ENCODE measurements at regions of chr12 and their contacts with region 1.

Region 1: DNA sequence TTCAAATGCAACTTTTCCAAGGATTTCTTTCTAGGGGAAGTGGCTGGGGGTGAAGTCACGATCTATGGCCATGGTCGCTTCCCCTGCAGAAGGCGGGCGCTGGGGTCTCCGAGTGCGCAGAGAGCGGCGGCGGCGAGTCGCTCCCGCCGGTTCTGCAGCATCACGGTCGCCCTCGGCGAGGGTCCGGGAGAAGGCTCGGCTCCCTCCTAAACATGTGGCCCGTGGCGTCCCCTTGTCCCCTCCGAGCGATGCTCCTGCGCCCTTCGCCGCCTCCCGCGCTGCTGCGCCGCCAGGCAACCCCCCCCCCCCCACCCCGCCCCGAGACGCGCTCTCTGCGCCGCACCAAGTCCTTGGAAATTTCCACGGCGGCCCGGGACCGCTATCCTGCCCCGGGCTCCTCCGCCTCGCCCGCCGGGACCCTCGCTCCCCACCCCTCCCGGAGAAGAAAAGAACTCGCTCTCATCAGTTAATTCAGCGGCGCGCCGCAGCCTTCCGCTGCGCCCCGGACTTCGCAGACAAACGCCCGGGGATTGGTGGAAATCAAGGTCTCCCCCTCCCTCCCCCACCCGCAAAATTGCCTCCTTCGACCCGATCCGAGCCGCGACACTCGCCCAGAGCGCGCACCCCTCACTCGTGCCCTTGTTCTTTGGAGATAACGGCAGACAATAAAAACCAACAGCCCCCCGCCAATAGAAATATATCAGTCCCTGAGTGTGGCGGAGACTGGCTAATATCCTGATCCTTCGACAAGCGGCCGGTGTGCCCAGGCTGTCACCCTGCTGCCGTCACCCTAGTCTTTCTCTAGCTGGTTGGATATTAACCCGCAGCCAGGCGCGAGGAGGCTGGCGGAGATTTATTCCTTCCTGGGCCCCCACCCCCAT is at the start of gene ST8SIA1:
- DNase-seq: peak; percentile 47
- H3K4me3 ChIP-seq: peak within 1 kb of the TSS; percentile 44
- H3K27ac ChIP-seq: peak within 1 kb of the TSS; percentile 49
- H3K4me1 ChIP-seq: no peaks in the 10 kb centered on the region
- H3K27me3 ChIP-seq: peaks cover 13% of the 10 kb centered on the region
- CTCF ChIP-seq: no peak
- total RNA-seq, gene ST8SIA1: 1.2 to 2.7 TPM

Region 2: DNA sequence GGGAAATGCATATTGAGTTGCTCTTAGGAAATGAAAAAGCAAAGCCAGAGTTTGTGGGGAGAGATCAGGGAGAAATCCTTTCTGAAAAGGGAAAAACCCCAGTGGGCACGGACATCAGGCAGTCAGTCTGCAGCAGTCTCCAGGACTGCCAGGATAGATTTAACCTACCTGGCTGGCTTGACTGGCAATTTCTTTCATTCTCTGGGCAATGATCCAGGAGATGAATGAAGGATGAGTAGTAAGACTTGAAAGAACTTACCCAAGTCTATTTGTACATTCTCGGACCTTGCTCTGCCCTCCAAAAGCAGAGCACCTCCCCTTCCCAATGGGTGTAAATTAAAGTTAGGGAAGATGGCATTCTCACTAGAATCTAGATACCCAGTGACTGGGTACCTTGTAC is 245.8 kb before region 1 on chr12:
- intact Hi-C with region 1: loop called (anchors 5 kb)
- DNase-seq: no peak
- H3K4me3 ChIP-seq: no peak overlapping the region
- H3K27ac ChIP-seq: no peak overlapping the region
- H3K4me1 ChIP-seq: no peaks in the 10 kb centered on the region
- H3K27me3 ChIP-seq: no peaks in the 10 kb centered on the region
- CTCF ChIP-seq: no peak

Region 3: GRCh38 chr12:22100958-22101748 is 233.5 kb before region 1 on chr12:
- intact Hi-C with region 1: loop called (anchors 5 kb)
- DNase-seq: peak; percentile 54
- H3K4me3 ChIP-seq: no peak overlapping the region
- H3K27ac ChIP-seq: no peak overlapping the region
- H3K4me1 ChIP-seq: no peaks in the 10 kb centered on the region
- H3K27me3 ChIP-seq: no peaks in the 10 kb centered on the region
- CTCF ChIP-seq: peak; percentile 34

Region 4: DNA sequence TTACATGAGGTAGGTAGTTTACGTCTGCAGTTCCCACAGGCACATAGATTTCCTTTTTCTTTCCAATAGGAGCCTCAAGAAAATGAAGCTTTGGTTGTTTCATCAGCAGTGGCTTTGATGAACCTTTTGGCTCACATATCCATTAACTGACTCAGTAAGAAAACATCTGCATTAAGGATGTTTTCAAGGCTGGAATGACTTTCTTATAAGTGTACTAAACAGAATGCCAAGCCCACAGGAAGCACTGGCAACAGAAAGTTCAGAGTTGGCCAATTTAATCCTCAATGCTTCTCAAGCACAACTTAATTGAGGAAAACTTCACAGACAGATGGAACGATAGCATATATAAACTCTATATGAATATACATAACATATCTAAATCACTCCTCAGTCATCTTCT is 63.6 kb before region 1 on chr12:
- intact Hi-C with region 1: no loop called
- DNase-seq: no peak
- H3K4me3 ChIP-seq: no peak overlapping the region
- H3K27ac ChIP-seq: no peak overlapping the region
- H3K4me1 ChIP-seq: no peaks in the 10 kb centered on the region
- H3K27me3 ChIP-seq: no peaks in the 10 kb centered on the region
- CTCF ChIP-seq: no peak